ENCODE measurements at regions of chr1 and their contacts with region 1.

Region 1: GRCh38 chr1:228457396-228458176 is 29.6 kb upstream of the RNF187 start:
- DNase-seq: peak; percentile 98 to 100 (median 99)
- ATAC-seq: peak; percentile 91
- H3K4me3 ChIP-seq: peak overlapping the region; percentile 61
- H3K27ac ChIP-seq: peak overlapping the region; percentile 97
- H3K4me1 ChIP-seq: peaks cover 27 to 37% of the 10 kb centered on the region in 2 experiments
- H3K27me3 ChIP-seq: no peaks in the 10 kb centered on the region
- CTCF ChIP-seq: peak in 2 of 3 experiments; percentile 60 to 70
- EP300 ChIP-seq: no peak
- POLR2A ChIP-seq: peak; percentile 100
- RAD21 ChIP-seq: peak; percentile 61 to 72

Region 2: DNA sequence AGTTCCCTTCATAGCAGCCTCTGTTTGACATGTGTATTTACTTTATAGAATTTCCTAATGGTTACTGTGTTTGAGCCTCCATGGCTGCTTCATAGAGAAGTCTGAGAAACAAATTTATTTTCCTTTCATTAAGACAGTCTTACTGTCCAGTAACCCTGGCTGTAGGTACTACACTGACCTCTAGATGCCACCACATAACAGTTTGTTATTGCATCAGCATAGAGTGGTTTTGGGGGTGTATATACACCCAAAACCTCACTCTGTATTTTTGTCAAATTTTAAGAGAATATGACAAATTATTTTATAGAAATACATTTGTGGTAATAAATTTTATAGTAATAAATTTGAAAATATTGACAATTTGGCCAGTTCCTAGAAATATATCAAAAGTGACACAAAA is 192.4 kb before region 1 on chr1:
- CTCF ChIA-PET with region 1: interaction called, 4 read pairs
- POLR2A ChIA-PET with region 1: no interaction called
- in situ Hi-C with region 1: no loop called
- intact Hi-C with region 1: loop called (anchors 5 kb)
- DNase-seq: peak; percentile 53 to 67 (median 60)
- ATAC-seq: peak; percentile 84
- H3K4me3 ChIP-seq: no peak overlapping the region
- H3K27ac ChIP-seq: no peak overlapping the region
- H3K4me1 ChIP-seq: peaks cover 4 to 21% of the 10 kb centered on the region in 2 experiments; a peak in 4 of 5 replicates
- H3K27me3 ChIP-seq: no peaks in the 10 kb centered on the region
- CTCF ChIP-seq: peak; percentile 63 to 66 (median 65)
- EP300 ChIP-seq: no peak
- POLR2A ChIP-seq: no peak
- RAD21 ChIP-seq: peak; percentile 58 to 76

Region 3: DNA sequence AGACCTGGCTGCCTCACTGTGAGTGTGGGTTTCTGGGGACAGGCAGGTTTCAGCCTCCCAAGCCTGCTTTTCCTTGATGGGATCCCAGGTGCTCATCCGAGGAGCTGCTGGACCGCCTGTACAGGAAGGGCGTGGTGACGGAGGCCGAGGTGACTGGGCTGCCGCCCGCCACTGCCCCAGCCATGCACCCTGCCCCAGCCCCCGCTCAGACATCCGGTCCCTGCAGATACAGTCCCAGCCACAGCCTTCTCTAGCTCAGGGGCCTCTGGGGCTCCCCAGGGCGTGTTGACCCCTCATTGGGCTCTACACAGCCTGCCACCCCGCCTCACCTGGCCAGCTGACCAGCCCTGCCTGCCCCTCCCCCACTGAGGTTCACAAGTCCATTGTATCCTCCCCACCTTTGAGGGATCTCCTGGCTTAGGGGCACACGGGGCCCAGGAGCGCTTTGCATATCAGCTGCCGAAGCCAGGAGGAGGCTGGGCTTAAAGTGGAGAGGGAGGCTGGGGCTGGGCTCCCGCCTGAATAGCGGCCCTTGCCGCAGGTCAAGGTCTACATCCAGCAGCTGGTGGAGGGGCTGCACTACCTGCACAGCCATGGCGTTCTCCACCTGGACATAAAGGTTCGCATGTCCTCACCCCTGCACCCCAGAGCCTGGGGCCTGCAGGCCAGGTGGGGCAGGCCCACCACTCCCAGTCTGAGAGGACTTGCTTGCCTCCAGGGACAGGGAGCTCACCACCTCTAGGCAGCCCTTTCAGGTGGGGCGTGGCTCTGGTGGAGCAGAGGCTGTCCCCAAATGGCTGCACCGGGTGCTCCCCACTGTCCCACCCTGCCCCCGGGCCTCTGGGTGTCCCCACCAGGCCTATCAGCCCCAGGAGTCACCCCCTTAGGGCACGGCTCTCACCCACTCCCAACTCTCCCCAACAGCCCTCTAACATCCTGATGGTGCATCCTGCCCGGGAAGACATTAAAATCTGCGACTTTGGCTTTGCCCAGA is 89.5 kb before region 1 on chr1:
- CTCF ChIA-PET with region 1: no interaction called
- POLR2A ChIA-PET with region 1: interaction called, 16 read pairs
- in situ Hi-C with region 1: no loop called
- intact Hi-C with region 1: loop called (anchors 2 kb)
- DNase-seq: peak; percentile 95 to 96 (median 96)
- ATAC-seq: peak; percentile 85
- H3K4me3 ChIP-seq: peak overlapping the region; percentile 34
- H3K27ac ChIP-seq: peak overlapping the region; percentile 85
- H3K4me1 ChIP-seq: peaks cover 48 to 96% of the 10 kb centered on the region in 2 experiments
- H3K27me3 ChIP-seq: no peaks in the 10 kb centered on the region
- CTCF ChIP-seq: no peak
- EP300 ChIP-seq: peak; percentile 80
- POLR2A ChIP-seq: peak; percentile 74
- RAD21 ChIP-seq: peak; percentile 13 to 23; a peak in 3 of 4 replicates

Region 4: GRCh38 chr1:228405987-228406265 is 51.7 kb before region 1 on chr1:
- CTCF ChIA-PET with region 1: no interaction called
- POLR2A ChIA-PET with region 1: interaction called, 13 read pairs
- in situ Hi-C with region 1: no loop called
- intact Hi-C with region 1: loop called (anchors 1 kb)
- DNase-seq: peak in 3 of 4 experiments; percentile 43 to 68 (median 68)
- ATAC-seq: peak; percentile 75
- H3K4me3 ChIP-seq: peak overlapping the region; percentile 100
- H3K27ac ChIP-seq: peak overlapping the region; percentile 96
- H3K4me1 ChIP-seq: peaks cover 47 to 75% of the 10 kb centered on the region in 2 experiments
- H3K27me3 ChIP-seq: no peaks in the 10 kb centered on the region
- CTCF ChIP-seq: no peak; a peak in 1 of 6 replicates
- EP300 ChIP-seq: no peak
- POLR2A ChIP-seq: no peak
- RAD21 ChIP-seq: no peak

Region 5: GRCh38 chr1:228445843-228446650 is 11.5 kb before region 1 on chr1:
- CTCF ChIA-PET with region 1: interaction called, 3 read pairs
- POLR2A ChIA-PET with region 1: interaction called, 58 read pairs
- in situ Hi-C with region 1: no loop called
- intact Hi-C with region 1: no loop called
- DNase-seq: peak in 1 of 4 experiments; percentile 35
- ATAC-seq: peak; percentile 31
- H3K4me3 ChIP-seq: no peak overlapping the region
- H3K27ac ChIP-seq: no peak overlapping the region
- H3K4me1 ChIP-seq: peaks cover 0 to 11% of the 10 kb centered on the region in 2 experiments; a peak in 3 of 5 replicates
- H3K27me3 ChIP-seq: 0 out of 5 replicates have a peak, but pooled peaks cover 0 to 5% of the 10 kb centered on the region in 2 experiments
- CTCF ChIP-seq: no peak
- EP300 ChIP-seq: no peak
- POLR2A ChIP-seq: no peak
- RAD21 ChIP-seq: no peak

Region 6: DNA sequence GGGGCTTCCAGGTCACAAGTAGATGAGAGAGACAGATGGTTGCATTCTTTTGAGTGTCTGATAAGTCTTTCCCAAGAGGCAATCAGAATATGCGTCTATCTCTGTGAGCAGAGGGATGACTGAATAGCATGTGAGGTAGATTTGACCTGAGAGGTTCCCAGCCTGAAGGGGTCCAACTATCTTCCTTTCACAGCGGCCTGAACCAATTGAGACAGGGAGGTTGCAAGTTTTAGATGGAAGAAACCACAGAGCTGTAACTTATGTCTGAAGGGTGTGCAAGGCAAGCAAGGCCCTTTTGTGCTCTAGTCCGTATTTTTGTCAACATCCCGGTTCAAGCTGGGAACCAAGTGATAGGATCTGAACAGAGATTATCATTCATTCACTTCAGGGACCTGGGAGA is 19.7 kb after region 1 on chr1:
- CTCF ChIA-PET with region 1: interaction called, 10 read pairs
- POLR2A ChIA-PET with region 1: interaction called, 15 read pairs
- in situ Hi-C with region 1: no loop called
- intact Hi-C with region 1: no loop called
- DNase-seq: peak in 2 of 4 experiments; percentile 50 to 84
- ATAC-seq: peak; percentile 71
- H3K4me3 ChIP-seq: no peak overlapping the region
- H3K27ac ChIP-seq: no peak overlapping the region
- H3K4me1 ChIP-seq: peaks cover 8 to 40% of the 10 kb centered on the region in 2 experiments
- H3K27me3 ChIP-seq: no peaks in the 10 kb centered on the region
- CTCF ChIP-seq: no peak
- EP300 ChIP-seq: 0 out of 2 replicates have a peak, but pooled peaks have one; percentile 37
- POLR2A ChIP-seq: no peak
- RAD21 ChIP-seq: no peak

Region 7: DNA sequence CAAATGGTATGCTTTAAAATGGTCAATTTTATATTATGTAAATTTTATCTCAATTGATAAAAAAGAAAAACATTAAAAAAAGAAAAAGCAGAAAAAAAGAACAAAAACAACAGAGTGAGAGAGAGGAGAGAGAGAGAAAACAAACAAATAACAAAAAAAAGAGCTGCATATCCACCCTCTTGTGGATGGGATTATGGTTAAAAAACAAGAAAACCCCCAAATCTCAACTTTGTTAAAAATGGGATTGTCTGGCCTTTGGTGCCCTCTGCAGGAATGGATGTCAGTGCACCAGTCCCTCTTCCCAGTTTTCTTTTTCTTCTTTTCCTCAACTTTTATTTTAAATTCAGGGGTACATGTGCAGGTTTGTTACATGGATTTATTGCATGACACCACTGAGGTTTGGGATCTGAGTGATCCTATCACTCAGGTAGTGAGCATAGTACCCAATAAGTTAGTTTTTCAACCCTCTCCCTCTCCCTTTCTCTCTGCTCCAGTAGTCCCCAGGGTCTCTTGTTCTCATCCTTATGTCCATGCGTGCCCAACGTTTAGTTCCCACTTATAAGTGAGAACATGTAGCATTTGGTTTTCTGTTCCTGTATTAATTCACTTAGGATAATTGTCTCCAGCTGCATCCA is 57.7 kb after region 1 on chr1:
- CTCF ChIA-PET with region 1: interaction called, 10 read pairs
- POLR2A ChIA-PET with region 1: interaction called, 52 read pairs
- in situ Hi-C with region 1: loop called (anchors 5 kb)
- intact Hi-C with region 1: loop called (anchors 1 kb)
- DNase-seq: peak; percentile 75 to 79 (median 77)
- ATAC-seq: peak; percentile 55
- H3K4me3 ChIP-seq: no peak overlapping the region
- H3K27ac ChIP-seq: no peak overlapping the region
- H3K4me1 ChIP-seq: peaks cover 42 to 46% of the 10 kb centered on the region in 2 experiments
- H3K27me3 ChIP-seq: peaks cover 0 to 2% of the 10 kb centered on the region in 2 experiments; a peak in 1 of 5 replicates
- CTCF ChIP-seq: peak; percentile 89 to 98 (median 95)
- EP300 ChIP-seq: no peak
- POLR2A ChIP-seq: no peak
- RAD21 ChIP-seq: peak; percentile 98 to 99